Activated naive CD4-positive, alpha-beta T cell treated with anti-CD3 and anti-CD28 coated beads for 36 hours (primary cell): ENCODE measurements at regions of chr6 and their contacts with region 1.

Region 1: DNA sequence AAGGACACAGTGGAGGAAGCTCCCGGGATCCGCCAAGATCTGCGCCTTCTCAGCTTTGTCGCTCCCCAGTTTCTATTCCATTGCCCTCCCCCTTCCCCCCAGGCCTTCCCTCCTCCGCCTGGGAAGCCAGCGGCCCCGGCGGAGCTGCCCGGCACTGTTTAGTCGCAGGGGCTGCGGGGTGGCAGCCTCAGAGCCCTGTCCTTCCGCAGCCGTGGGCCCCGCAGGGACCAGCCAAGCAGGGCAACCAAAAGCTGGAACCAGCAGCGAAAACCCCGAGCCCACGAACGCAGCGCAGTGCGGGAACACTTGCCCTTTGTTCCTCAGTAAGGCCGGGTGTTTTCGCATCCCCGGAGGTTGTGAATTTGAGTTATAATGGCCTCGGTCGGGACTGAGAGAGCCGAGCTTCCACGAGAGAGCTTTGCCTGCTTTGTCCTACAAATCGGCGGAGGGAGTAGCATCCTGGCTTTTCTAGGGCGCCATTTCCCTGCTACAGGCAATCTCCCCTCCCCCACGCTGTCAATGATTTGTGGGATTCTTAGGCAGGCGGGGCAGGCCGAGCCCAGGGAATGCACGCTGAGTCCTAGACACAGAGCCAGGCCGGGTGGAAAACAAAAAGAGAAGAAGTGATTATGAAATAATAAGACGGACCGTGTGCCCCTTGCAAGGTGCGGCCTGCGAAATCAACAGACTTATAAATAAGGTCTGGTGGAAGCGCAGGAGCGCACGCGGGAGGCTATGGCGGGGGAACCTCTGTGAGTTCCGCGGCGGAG is 4.0 kb upstream of the TUBB2B start:
- DNase-seq: no peak
- H3K4me3 Mint-ChIP-seq: peak overlapping the region; percentile 50
- H3K27ac Mint-ChIP-seq: no peak overlapping the region
- H3K4me1 Mint-ChIP-seq: peaks cover 43% of the 10 kb centered on the region
- H3K27me3 Mint-ChIP-seq: peaks cover 72% of the 10 kb centered on the region

Region 2: GRCh38 chr6:3162565-3163247 is 68.7 kb before region 1 on chr6:
- CTCF ChIA-PET with region 1: no interaction called
- intact Hi-C with region 1: loop called (anchors 2 kb)
- DNase-seq: peak; percentile 57
- H3K4me3 Mint-ChIP-seq: peak overlapping the region; percentile 80
- H3K27ac Mint-ChIP-seq: no peak overlapping the region
- H3K4me1 Mint-ChIP-seq: peaks cover 24% of the 10 kb centered on the region
- H3K27me3 Mint-ChIP-seq: peaks cover 23% of the 10 kb centered on the region

Region 3: DNA sequence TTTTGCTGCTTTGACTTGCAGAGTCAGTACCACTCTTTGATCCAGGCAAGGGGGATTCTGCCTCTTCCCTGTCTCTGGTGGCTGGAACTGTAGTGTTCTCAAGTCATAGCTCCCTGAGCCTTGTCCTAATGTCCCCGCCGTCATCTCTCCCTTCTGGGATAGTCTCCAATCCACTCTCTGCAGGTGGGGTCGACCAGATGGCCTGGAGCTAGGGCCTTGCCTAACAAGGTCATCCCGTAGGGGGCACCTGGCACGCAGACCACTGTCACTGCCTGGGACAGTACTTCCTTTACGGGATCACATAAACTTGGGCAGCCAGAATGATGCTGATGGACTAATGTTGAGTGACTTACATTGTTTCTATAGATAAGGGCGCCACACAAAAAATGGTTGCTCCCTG is 344.3 kb after region 1 on chr6:
- CTCF ChIA-PET with region 1: no interaction called
- intact Hi-C with region 1: no loop called
- DNase-seq: no peak
- H3K4me3 Mint-ChIP-seq: no peak overlapping the region
- H3K27ac Mint-ChIP-seq: no peak overlapping the region
- H3K4me1 Mint-ChIP-seq: no peaks in the 10 kb centered on the region
- H3K27me3 Mint-ChIP-seq: no peaks in the 10 kb centered on the region